Activated CD4-positive, alpha-beta memory T cell treated with anti-CD3 and anti-CD28 coated beads, Interleukin-2, amount 10 ng/mL, durations not matched to agents 7 days and 5 days (primary cell): ENCODE measurements at regions of chr19 and their contacts with region 1.

Region 1: GRCh38 chr19:49097455-49098288 is 12.4 kb downstream of the SNRNP70 start:
- DNase-seq: peak; percentile 79
- H3K4me3 Mint-ChIP-seq: no peak overlapping the region
- H3K27ac Mint-ChIP-seq: peak overlapping the region; percentile 63
- H3K4me1 Mint-ChIP-seq: peaks cover 14% of the 10 kb centered on the region
- H3K27me3 Mint-ChIP-seq: no peaks in the 10 kb centered on the region

Region 2: GRCh38 chr19:48896191-48896720 is 201.4 kb before region 1 on chr19:
- CTCF ChIA-PET with region 1: no interaction called
- POLR2A ChIA-PET with region 1: no interaction called
- DNase-seq: peak; percentile 29
- H3K4me3 Mint-ChIP-seq: no peak overlapping the region
- H3K27ac Mint-ChIP-seq: no peak overlapping the region
- H3K4me1 Mint-ChIP-seq: peaks cover 30% of the 10 kb centered on the region
- H3K27me3 Mint-ChIP-seq: peaks cover 19% of the 10 kb centered on the region

Region 3: GRCh38 chr19:49069026-49069425 is 28.6 kb before region 1 on chr19:
- CTCF ChIA-PET with region 1: interaction called, 10 read pairs
- POLR2A ChIA-PET with region 1: no interaction called
- DNase-seq: no peak
- H3K4me3 Mint-ChIP-seq: no peak overlapping the region
- H3K27ac Mint-ChIP-seq: no peak overlapping the region
- H3K4me1 Mint-ChIP-seq: peaks cover 7% of the 10 kb centered on the region
- H3K27me3 Mint-ChIP-seq: peaks cover 76% of the 10 kb centered on the region

Region 4: GRCh38 chr19:49085020-49085867 is 12.4 kb before region 1 on chr19 and contains the start of gene SNRNP70:
- CTCF ChIA-PET with region 1: interaction called, 35 read pairs
- POLR2A ChIA-PET with region 1: interaction called, 4 read pairs
- DNase-seq: peak; percentile 99
- H3K4me3 Mint-ChIP-seq: peak within 1 kb of the TSS; percentile 96
- H3K27ac Mint-ChIP-seq: peak within 1 kb of the TSS; percentile 71
- H3K4me1 Mint-ChIP-seq: peaks cover 38% of the 10 kb centered on the region
- H3K27me3 Mint-ChIP-seq: peaks cover under 1% of the 10 kb centered on the region
- total RNA-seq, gene SNRNP70: 179 to 188 TPM

Region 5: GRCh38 chr19:49113762-49114629 is 16.3 kb after region 1 on chr19 and contains the start of gene LIN7B:
- CTCF ChIA-PET with region 1: interaction called, 30 read pairs
- POLR2A ChIA-PET with region 1: interaction called, 8 read pairs
- DNase-seq: peak; percentile 79
- H3K4me3 Mint-ChIP-seq: peak within 1 kb of the TSS; percentile 85
- H3K27ac Mint-ChIP-seq: no peak within 1 kb of the TSS
- H3K4me1 Mint-ChIP-seq: peaks cover 36% of the 10 kb centered on the region
- H3K27me3 Mint-ChIP-seq: no peaks in the 10 kb centered on the region
- total RNA-seq, gene LIN7B: 4.3 to 4.7 TPM

Region 6: DNA sequence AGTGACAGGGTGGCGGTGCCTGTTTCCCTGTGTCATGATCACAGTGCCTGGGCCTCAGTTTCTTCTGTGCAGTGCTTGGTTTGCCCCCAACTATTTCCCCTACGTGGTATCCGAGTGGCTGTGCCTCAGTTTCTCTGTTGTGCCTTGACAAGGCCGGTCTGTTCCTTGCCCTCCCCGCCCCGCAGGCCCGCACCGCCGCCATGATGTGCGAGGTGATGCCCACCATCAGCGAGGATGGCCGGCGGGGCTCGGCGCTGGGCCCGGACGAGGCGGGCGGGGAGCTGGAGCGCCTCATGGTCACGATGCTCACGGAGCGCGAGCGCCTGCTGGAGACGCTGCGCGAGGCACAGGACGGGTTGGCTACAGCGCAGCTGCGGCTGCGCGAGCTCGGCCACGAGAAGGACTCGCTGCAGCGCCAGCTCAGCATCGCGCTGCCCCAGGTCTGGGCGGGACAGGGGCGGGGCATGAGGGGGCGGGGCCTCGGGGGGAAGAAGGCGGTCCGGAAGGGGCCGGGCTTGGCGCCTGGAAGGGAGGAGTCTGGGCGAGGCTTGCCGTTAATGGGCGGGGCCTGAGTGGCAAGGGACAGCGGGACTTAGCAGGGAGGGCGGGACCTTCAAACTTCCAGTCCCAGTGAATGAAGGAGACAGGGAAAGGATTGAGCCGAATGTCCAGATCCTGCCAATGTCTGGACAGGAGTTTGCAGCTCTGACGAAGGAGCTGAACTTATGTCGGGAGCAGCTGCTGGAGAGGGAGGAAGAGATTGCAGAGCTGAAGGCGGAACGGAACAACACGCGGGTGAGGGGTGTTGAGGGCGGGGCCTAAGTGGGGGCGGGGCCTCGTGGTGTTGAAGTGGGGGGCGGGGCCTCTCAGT is 30.2 kb after region 1 on chr19:
- CTCF ChIA-PET with region 1: interaction called, 18 read pairs
- POLR2A ChIA-PET with region 1: no interaction called
- DNase-seq: peak; percentile 96
- H3K4me3 Mint-ChIP-seq: peak overlapping the region; percentile 80
- H3K27ac Mint-ChIP-seq: peak overlapping the region; percentile 73
- H3K4me1 Mint-ChIP-seq: peaks cover 19% of the 10 kb centered on the region
- H3K27me3 Mint-ChIP-seq: peaks cover 6% of the 10 kb centered on the region

Region 7: DNA sequence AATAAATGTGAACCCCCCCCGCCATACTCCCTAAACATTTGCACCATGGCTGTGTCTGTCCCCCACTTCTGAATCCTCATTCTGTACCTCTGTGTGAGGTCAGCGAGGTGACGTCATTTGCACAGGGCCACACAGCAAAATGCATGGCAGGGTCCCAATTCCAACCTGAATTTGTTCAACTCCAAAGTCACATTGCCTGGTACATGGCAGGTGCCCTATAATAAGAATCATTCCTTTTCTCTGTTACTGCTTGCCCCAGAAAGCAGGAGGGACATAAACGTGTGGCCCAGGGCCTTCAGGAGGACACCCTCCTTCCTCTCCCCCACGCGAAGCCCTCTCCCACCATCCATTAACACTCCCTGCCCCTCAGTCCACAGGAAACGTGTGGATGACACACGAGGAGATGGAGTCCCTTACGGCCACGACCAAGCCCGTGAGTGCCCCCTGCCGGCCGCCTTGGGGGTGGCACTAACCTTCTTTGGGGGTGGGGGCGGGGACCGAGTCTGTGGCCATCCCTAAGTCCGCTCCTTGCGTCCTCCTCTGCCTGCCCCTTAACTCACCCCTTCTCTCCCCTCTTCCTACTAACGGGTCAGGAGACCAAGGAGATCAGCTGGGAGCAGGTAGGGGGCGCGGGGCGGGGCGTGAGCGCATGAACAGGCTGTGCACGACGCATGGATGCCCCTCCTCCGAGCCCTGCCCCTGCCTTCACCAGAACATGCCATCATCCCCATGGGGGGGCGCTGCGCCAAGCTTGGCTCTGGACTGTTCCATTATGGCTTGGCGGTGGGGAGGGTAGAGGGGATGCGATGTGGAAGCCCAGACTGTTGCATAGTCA is 48.1 kb after region 1 on chr19:
- CTCF ChIA-PET with region 1: interaction called, 20 read pairs
- POLR2A ChIA-PET with region 1: no interaction called
- DNase-seq: peak; percentile 80
- H3K4me3 Mint-ChIP-seq: peak overlapping the region; percentile 24
- H3K27ac Mint-ChIP-seq: no peak overlapping the region
- H3K4me1 Mint-ChIP-seq: peaks cover 40% of the 10 kb centered on the region
- H3K27me3 Mint-ChIP-seq: peaks cover 48% of the 10 kb centered on the region

Region 8: DNA sequence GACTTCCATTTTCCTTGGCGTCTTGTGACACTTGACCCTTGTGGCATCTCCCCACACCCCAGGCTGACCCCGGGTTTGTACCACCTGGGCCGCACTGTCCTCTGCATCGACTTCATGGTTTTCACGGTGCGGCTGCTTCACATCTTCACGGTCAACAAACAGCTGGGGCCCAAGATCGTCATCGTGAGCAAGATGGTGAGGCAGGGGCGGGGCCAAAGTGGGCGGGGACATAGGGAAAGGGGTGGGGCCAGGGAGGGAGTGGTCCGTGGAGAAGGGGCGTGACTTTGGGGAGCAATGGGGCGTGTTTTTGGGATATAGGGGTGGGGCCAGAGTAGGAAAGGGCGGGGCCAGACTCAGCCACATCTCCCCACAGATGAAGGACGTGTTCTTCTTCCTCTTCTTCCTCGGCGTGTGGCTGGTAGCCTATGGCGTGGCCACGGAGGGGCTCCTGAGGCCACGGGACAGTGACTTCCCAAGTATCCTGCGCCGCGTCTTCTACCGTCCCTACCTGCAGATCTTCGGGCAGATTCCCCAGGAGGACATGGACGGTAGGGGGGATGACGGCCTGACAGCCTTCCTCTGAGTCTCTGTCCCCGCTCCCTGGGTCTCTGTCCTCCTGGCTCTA is 102.7 kb after region 1 on chr19:
- CTCF ChIA-PET with region 1: interaction called, 31 read pairs
- POLR2A ChIA-PET with region 1: interaction called, 5 read pairs
- DNase-seq: no peak
- H3K4me3 Mint-ChIP-seq: no peak overlapping the region
- H3K27ac Mint-ChIP-seq: no peak overlapping the region
- H3K4me1 Mint-ChIP-seq: peaks cover 6% of the 10 kb centered on the region
- H3K27me3 Mint-ChIP-seq: peaks cover 3% of the 10 kb centered on the region